Psoas muscle (tissue), 8 donors: ENCODE measurements at regions of chr5 and their contacts with region 1.

Region 1: DNA sequence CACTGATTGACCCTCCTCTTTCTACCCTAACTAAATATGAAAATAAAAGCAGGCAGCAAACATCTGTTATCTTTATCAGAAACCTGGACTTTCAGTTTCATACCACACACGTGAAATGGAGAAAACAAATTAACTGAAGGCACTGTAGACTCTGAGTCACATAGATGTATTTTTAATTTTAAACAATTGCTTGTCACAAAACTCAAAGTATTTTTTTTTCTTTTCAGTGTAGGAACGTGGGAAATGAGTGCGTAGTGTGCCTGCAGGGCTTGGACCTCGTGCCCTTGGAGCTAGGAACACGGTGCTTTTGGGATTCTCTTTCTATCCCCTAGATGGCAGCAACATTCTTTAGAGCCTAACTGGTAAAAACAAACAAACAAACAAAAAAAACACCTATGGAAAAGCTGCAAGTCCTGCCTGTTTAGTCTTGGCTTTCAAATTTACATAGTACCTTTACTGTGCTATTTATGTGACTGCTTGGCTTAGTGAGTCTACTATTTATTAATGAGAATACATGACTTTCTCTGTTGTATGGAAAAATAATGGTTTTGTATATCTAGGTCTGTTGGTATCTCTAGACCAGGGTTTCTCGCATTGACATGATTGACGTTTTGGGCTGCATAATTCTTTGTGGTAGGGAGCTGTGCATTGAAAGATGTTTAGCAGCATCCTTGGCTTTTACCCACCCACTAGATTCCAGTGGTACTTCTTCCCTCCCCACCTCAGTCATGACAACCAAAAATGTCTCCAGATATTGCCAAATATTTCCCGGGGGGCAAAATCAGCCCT is 16.8 kb upstream of the ACTBL2 start:
- DNase-seq: no peak
- ATAC-seq: peak; percentile 49 to 83 (median 64)
- H3K4me3 ChIP-seq: peak overlapping the region; percentile 31
- H3K27ac ChIP-seq: no peak overlapping the region
- H3K4me1 ChIP-seq: peaks cover 13% of the 10 kb centered on the region
- H3K27me3 ChIP-seq: no peaks in the 10 kb centered on the region
- CTCF ChIP-seq: peak; percentile 76

Region 2: GRCh38 chr5:57618767-57619381 is 119.4 kb after region 1 on chr5:
- intact Hi-C with region 1: no loop called
- DNase-seq: no peak
- ATAC-seq: no peak
- H3K4me3 ChIP-seq: no peak overlapping the region
- H3K27ac ChIP-seq: no peak overlapping the region
- H3K4me1 ChIP-seq: no peaks in the 10 kb centered on the region
- H3K27me3 ChIP-seq: no peaks in the 10 kb centered on the region
- CTCF ChIP-seq: no peak

Region 3: DNA sequence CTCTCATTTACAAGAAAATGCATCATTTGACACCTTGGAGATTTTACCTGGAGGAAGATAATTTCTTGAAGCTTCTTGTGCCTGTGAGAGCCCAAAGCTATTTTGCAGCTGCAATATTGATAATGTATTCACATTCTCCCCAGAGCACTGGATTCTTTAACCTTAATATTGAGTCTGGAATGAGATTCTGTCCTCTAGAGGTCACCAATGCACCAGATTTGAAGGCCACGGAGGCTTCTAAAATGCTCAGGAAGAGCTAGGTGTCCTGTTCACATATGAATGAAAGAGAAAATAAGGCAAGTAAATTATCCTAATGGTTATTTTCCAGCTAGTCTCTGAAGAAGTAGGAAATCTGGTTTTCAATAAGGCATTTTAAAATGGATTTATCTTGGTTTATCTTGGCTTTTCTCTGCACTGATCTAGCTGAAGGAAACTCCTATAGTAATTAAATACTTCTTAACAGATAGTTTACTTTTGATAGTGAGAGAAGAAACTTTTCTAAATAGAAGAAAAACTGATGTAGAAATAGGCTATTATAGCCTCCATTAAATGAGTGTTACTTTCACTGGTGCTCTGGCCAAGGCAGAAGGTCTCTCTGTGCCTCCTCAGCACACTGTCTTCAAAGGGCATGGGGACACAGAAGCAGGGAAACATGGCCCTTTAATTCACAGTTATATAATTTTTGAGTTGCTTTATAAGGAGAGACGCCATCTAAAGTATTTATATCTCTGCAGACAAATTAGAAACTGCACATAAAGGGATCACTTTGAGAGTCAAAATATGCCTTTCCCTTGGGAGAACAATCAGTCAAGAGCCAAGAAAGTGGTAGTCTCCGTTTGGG is 280.1 kb after region 1 on chr5:
- intact Hi-C with region 1: loop called (anchors 5 kb)
- DNase-seq: no peak
- ATAC-seq: peak; percentile 82 to 92 (median 83)
- H3K4me3 ChIP-seq: no peak overlapping the region
- H3K27ac ChIP-seq: no peak overlapping the region
- H3K4me1 ChIP-seq: peaks cover 23% of the 10 kb centered on the region
- H3K27me3 ChIP-seq: no peaks in the 10 kb centered on the region
- CTCF ChIP-seq: peak; percentile 70